Vagina (tissue), 2 donors: ENCODE measurements at regions of chr18 and their contacts with region 1.

Region 1: GRCh38 chr18:72555101-72555500 is 11.0 kb upstream of the CBLN2 start:
- DNase-seq: no peak
- H3K4me3 ChIP-seq: no peak overlapping the region
- H3K27ac ChIP-seq: no peak overlapping the region
- H3K4me1 ChIP-seq: no peaks in the 10 kb centered on the region
- H3K27me3 ChIP-seq: no peaks in the 10 kb centered on the region
- CTCF ChIP-seq: no peak
- POLR2A ChIP-seq: no peak

Region 2: GRCh38 chr18:72544092-72544886 is 10.8 kb before region 1 on chr18 and contains the start of gene CBLN2:
- intact Hi-C with region 1: loop called (anchors 1 kb)
- DNase-seq: no peak
- H3K4me3 ChIP-seq: peak within 1 kb of the TSS in 1 of 2 donors; percentile 7
- H3K27ac ChIP-seq: no peak within 1 kb of the TSS
- H3K4me1 ChIP-seq: peaks cover 10% of the 10 kb centered on the region
- H3K27me3 ChIP-seq: no peaks in the 10 kb centered on the region
- CTCF ChIP-seq: peak in 1 of 3 experiments; percentile 7
- POLR2A ChIP-seq: no peak
- total RNA-seq, gene CBLN2: not detected